ENCODE measurements at regions of chr11 and their contacts with region 1.

Region 1: DNA sequence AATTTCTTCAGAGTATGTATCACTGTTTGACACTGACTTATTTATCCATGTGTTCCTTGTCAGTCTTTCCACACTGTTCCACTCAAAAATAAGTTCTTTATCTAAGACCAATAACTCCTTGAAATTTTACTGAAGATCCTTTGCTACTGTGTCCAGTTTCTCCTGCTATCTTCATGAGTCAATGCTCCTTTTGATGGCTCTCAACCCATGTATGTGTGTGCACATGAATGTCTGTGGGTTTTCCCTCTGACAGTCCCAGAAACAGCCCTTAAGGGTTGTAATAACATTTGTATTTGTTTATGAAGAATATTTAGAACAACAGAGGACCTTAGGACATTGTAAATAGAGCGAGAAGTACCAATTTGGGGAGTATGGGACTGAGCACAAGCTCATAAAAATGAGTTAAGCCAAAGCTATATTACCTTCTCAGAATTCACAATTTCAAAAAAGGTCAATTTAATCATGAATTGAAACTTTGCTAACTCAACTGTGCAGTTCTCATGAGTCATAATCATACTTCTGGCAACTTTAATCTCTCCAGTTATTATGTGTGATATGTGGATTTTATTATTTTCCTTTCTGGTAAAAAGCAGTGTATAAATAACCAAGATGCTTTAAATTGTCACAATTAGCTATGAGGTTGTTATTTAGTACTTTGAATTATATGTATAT is 533.6 kb downstream of the CNTN5 start:
- DNase-seq: no peak
- H3K4me3 ChIP-seq: no peak overlapping the region
- H3K27ac ChIP-seq: no peak overlapping the region
- H3K4me1 ChIP-seq: no peaks in the 10 kb centered on the region
- H3K27me3 ChIP-seq: no peaks in the 10 kb centered on the region
- CTCF ChIP-seq: no peak

Region 2: DNA sequence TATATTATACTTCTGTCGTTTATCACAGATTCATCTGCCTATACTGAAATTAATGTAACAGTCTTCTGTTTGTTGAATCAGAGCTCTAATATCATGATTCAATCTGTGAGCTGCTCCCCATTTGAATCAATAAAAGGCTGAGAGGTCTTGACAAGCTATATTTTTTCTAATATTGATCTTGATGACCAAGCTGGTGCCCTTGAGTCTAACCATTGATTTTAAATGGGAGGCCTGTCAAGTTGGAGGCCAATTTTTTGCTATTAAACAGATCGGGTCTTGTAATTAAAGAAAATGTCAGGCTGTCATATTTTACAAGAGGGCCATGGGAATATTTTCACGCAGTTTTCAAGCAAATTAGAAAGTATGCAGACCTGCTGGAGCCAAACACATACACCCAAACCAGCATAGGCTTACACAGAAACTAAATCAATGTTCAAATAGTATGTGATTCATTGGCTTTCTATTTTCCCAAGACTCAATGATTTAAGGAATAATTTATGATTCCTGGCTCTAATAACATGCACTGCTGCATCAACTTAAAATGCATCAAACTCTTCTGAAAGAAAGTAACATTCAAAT is 246.8 kb before region 1 on chr11:
- intact Hi-C with region 1: no loop called
- DNase-seq: no peak
- H3K4me3 ChIP-seq: no peak overlapping the region
- H3K27ac ChIP-seq: no peak overlapping the region
- H3K4me1 ChIP-seq: no peaks in the 10 kb centered on the region
- H3K27me3 ChIP-seq: no peaks in the 10 kb centered on the region
- CTCF ChIP-seq: no peak

Region 3: GRCh38 chr11:99501655-99502054 is 52.7 kb before region 1 on chr11:
- intact Hi-C with region 1: loop called (anchors 5 kb)
- DNase-seq: no peak
- H3K4me3 ChIP-seq: no peak overlapping the region
- H3K27ac ChIP-seq: no peak overlapping the region
- H3K4me1 ChIP-seq: no peaks in the 10 kb centered on the region
- H3K27me3 ChIP-seq: no peaks in the 10 kb centered on the region
- CTCF ChIP-seq: no peak